ENCODE measurements at regions of chr16 and their contacts with region 1.

Region 1: GRCh38 chr16:22077700-22078313 is 14.5 kb upstream of the VWA3A start:
- DNase-seq: no peak
- ATAC-seq: peak; percentile 92
- H3K4me3 ChIP-seq: no peak overlapping the region
- H3K27ac ChIP-seq: no peak overlapping the region
- H3K4me1 ChIP-seq: no peaks in the 10 kb centered on the region
- H3K27me3 ChIP-seq: no peaks in the 10 kb centered on the region
- CTCF ChIP-seq: peak; percentile 72 to 85 (median 74)
- EP300 ChIP-seq: no peak; a peak in 1 of 4 replicates
- POLR2A ChIP-seq: no peak
- RAD21 ChIP-seq: peak; percentile 89

Region 2: DNA sequence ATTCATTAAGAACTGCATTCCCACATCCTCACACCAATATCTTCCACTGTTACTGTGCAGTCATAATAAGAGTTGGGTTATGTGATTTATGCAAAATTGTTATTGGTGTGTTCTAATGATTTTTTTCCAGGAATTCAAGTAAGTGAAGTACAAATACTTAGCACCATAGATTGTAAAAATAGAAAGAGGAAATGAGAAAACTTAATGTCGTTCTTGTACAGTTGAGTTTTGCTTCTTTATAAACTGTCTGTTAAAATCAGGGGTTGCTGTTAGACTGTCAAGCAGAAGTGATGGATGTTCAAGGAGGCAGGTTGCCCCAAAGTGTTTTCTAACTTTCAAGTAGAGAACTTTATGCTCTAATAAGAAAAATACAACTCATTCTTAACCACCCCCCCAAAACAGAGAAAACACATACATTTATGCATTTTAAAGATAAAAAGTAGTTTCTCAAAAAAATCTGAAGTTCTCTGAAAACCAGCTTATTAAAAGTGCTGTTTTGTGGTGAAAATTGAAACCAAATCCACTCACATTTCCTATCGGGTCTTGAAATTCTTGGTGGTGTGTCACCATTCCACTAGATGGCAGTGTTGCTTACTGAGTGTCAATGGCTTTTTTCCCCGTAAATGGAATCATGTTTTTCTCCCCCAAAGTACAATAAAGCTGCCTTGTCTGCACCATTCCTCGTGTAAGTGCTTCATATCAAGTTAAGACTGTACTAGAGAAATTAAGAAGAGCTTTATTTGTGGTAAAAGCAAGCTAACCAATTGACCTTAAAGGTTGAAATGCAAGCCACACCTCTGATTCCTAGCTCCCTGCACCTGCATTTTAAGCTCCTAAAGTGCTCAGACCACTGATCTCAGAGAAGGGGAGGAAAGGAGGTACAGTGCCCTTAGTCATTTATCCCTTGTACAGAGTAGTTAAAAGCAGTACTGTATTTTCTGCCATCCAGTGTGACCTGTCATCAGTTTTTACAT is 420.7 kb before region 1 on chr16:
- CTCF ChIA-PET with region 1: interaction called, 6 read pairs
- POLR2A ChIA-PET with region 1: no interaction called
- RAD21 ChIA-PET with region 1: interaction called, 10 read pairs
- SMC1A ChIA-PET with region 1: interaction called, 3 read pairs
- in situ Hi-C with region 1: no loop called
- intact Hi-C with region 1: no loop called
- DNase-seq: peak; percentile 32
- ATAC-seq: peak; percentile 84
- H3K4me3 ChIP-seq: peak overlapping the region; percentile 9; the same call in 1 of the 2 replicates
- H3K27ac ChIP-seq: peak overlapping the region; percentile 38
- H3K4me1 ChIP-seq: peaks cover 29% of the 10 kb centered on the region
- H3K27me3 ChIP-seq: no peaks in the 10 kb centered on the region
- CTCF ChIP-seq: peak; percentile 67 to 81 (median 79)
- EP300 ChIP-seq: peak; percentile 61 to 74; a peak in 3 of 4 replicates
- POLR2A ChIP-seq: no peak
- RAD21 ChIP-seq: peak; percentile 83

Region 3: GRCh38 chr16:21959050-21959449 is 118.8 kb before region 1 on chr16:
- CTCF ChIA-PET with region 1: interaction called, 18 read pairs
- POLR2A ChIA-PET with region 1: no interaction called
- RAD21 ChIA-PET with region 1: interaction called, 13 read pairs
- SMC1A ChIA-PET with region 1: interaction called, 26 read pairs
- in situ Hi-C with region 1: no loop called
- intact Hi-C with region 1: no loop called
- DNase-seq: no peak
- ATAC-seq: peak; percentile 64
- H3K4me3 ChIP-seq: no peak overlapping the region
- H3K27ac ChIP-seq: peak overlapping the region; percentile 21; the same call in 1 of the 2 replicates
- H3K4me1 ChIP-seq: peaks cover 21% of the 10 kb centered on the region
- H3K27me3 ChIP-seq: no peaks in the 10 kb centered on the region
- CTCF ChIP-seq: no peak
- EP300 ChIP-seq: 0 out of 4 replicates have a peak, but pooled peaks of 1 of the 2 experiments have one; percentile 41
- POLR2A ChIP-seq: no peak
- RAD21 ChIP-seq: no peak

Region 4: GRCh38 chr16:22007509-22008214 is 70.1 kb before region 1 on chr16 and contains the start of gene MOSMO:
- CTCF ChIA-PET with region 1: interaction called, 686 read pairs
- POLR2A ChIA-PET with region 1: interaction called, 8 read pairs
- RAD21 ChIA-PET with region 1: interaction called, 466 read pairs
- SMC1A ChIA-PET with region 1: interaction called, 567 read pairs
- in situ Hi-C with region 1: loop called (anchors 5 kb)
- intact Hi-C with region 1: no loop called
- DNase-seq: no peak
- ATAC-seq: peak; percentile 88
- H3K4me3 ChIP-seq: peak within 1 kb of the TSS; percentile 98
- H3K27ac ChIP-seq: peak within 1 kb of the TSS; percentile 54
- H3K4me1 ChIP-seq: peaks cover 15% of the 10 kb centered on the region
- H3K27me3 ChIP-seq: no peaks in the 10 kb centered on the region
- CTCF ChIP-seq: no peak
- EP300 ChIP-seq: no peak
- POLR2A ChIP-seq: peak; percentile 75
- RAD21 ChIP-seq: no peak
- polyA plus RNA-seq, gene MOSMO: 2.2 to 7.3 TPM

Region 5: GRCh38 chr16:22055878-22056277 is 21.9 kb before region 1 on chr16:
- CTCF ChIA-PET with region 1: interaction called, 28 read pairs
- POLR2A ChIA-PET with region 1: interaction called, 5 read pairs
- RAD21 ChIA-PET with region 1: interaction called, 19 read pairs
- SMC1A ChIA-PET with region 1: interaction called, 25 read pairs
- in situ Hi-C with region 1: no loop called
- intact Hi-C with region 1: no loop called
- DNase-seq: no peak
- ATAC-seq: no peak
- H3K4me3 ChIP-seq: no peak overlapping the region
- H3K27ac ChIP-seq: no peak overlapping the region
- H3K4me1 ChIP-seq: peaks cover 4% of the 10 kb centered on the region; the same call in 1 of the 2 replicates
- H3K27me3 ChIP-seq: no peaks in the 10 kb centered on the region
- CTCF ChIP-seq: no peak
- EP300 ChIP-seq: no peak
- POLR2A ChIP-seq: no peak
- RAD21 ChIP-seq: no peak

Region 6: GRCh38 chr16:22109258-22109898 is 31.6 kb after region 1 on chr16:
- CTCF ChIA-PET with region 1: interaction called, 17 read pairs
- POLR2A ChIA-PET with region 1: no interaction called
- RAD21 ChIA-PET with region 1: interaction called, 3 read pairs
- SMC1A ChIA-PET with region 1: interaction called, 8 read pairs
- in situ Hi-C with region 1: no loop called
- intact Hi-C with region 1: no loop called
- DNase-seq: no peak
- ATAC-seq: peak; percentile 49
- H3K4me3 ChIP-seq: no peak overlapping the region
- H3K27ac ChIP-seq: no peak overlapping the region
- H3K4me1 ChIP-seq: no peaks in the 10 kb centered on the region
- H3K27me3 ChIP-seq: peaks cover 0 to 8% of the 10 kb centered on the region in 2 experiments; a peak in 1 of 4 replicates
- CTCF ChIP-seq: no peak
- EP300 ChIP-seq: no peak
- POLR2A ChIP-seq: no peak
- RAD21 ChIP-seq: no peak

Region 7: DNA sequence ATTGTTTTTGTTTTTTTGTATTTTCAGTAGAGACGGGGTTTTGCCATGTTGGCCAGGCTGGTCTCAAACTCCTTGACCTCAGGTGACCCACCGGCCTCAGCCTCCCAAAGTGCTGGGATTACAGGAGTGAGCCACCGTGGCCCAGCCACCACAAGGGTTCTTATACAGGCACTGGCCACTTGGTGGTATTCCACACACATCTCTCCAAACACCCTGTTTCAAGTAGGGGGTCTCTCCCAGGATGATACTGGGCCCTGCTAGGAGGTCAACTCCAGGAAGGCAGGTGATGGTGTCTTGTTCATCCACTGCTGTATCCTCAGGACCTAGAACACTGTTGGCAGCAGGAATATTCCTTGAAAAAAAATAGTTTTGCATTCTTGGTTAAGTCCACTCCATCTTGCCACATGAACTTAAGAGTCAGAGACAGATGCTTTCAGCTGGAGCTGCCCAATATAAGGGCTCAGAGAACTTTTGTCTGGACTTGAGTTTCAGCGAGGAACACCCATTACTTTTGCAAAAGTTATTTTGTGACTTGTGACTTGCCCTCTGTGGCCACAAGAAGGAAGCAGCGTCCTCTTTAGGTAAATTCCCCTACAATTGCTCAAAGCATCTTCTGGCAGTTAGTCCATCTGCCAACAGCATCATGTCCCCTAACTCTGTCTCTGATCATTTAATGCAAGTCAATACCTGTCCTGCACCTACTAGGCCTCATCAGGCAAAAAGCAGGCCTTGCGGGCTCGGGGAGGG is 120.9 kb after region 1 on chr16:
- CTCF ChIA-PET with region 1: no interaction called
- POLR2A ChIA-PET with region 1: no interaction called
- RAD21 ChIA-PET with region 1: no interaction called
- SMC1A ChIA-PET with region 1: no interaction called
- in situ Hi-C with region 1: no loop called
- intact Hi-C with region 1: no loop called
- DNase-seq: no peak
- ATAC-seq: peak; percentile 42
- H3K4me3 ChIP-seq: no peak overlapping the region
- H3K27ac ChIP-seq: no peak overlapping the region; the same call in 1 of the 2 replicates
- H3K4me1 ChIP-seq: peaks cover 31% of the 10 kb centered on the region
- H3K27me3 ChIP-seq: no peaks in the 10 kb centered on the region
- CTCF ChIP-seq: peak; percentile 2 to 31 (median 30); a peak in 4 of 6 replicates
- EP300 ChIP-seq: no peak
- POLR2A ChIP-seq: no peak
- RAD21 ChIP-seq: peak; percentile 35; the same call in 1 of the 2 replicates

Region 8: DNA sequence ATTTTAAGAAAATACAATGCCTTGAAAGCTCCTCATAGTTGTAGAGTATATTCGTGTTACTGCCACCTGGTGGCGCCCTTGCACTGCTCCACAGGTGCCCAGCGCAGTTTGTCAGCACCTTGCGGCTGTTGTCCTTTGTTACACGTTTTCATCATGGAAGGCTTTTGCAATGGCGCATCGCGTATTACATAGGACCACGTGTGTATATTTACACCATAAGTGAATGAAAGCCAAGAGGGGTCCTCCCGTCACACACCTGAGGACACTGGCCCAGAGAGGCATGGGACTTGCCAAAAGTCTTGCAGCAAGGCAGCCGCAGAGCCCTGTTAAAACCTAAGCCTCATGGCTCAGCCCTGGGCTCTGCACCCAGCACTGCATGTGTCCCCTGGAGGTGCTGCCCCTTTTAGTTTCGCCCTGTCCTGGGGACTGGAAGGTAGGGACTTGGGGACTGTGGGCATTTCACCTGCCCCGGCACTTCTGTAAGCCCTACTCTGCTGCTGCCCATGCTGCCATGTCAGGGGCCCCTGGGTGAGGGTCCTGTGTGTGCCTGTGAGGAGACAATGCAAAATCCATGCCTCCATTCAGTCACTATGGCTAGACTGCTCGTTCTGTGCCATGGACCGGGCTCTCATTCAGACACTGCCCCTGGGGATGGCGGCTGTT is 243.7 kb after region 1 on chr16:
- CTCF ChIA-PET with region 1: no interaction called
- POLR2A ChIA-PET with region 1: no interaction called
- RAD21 ChIA-PET with region 1: no interaction called
- SMC1A ChIA-PET with region 1: no interaction called
- in situ Hi-C with region 1: no loop called
- intact Hi-C with region 1: no loop called
- DNase-seq: peak; percentile 36
- ATAC-seq: peak; percentile 91
- H3K4me3 ChIP-seq: no peak overlapping the region
- H3K27ac ChIP-seq: no peak overlapping the region
- H3K4me1 ChIP-seq: no peaks in the 10 kb centered on the region
- H3K27me3 ChIP-seq: no peaks in the 10 kb centered on the region
- CTCF ChIP-seq: peak; percentile 83 to 95 (median 94)
- EP300 ChIP-seq: no peak
- POLR2A ChIP-seq: no peak
- RAD21 ChIP-seq: peak; percentile 97

Measured in GM12878 (cell line).